ENCODE measurements at regions of chr16 and their contacts with region 1.

Region 1: GRCh38 chr16:84084570-84085270 is 32.0 kb downstream of the MBTPS1 start:
- DNase-seq: peak; percentile 79
- H3K4me3 Mint-ChIP-seq: no peak overlapping the region
- H3K27ac Mint-ChIP-seq: no peak overlapping the region
- H3K4me1 Mint-ChIP-seq: peaks cover 39% of the 10 kb centered on the region
- H3K27me3 Mint-ChIP-seq: no peaks in the 10 kb centered on the region

Region 2: DNA sequence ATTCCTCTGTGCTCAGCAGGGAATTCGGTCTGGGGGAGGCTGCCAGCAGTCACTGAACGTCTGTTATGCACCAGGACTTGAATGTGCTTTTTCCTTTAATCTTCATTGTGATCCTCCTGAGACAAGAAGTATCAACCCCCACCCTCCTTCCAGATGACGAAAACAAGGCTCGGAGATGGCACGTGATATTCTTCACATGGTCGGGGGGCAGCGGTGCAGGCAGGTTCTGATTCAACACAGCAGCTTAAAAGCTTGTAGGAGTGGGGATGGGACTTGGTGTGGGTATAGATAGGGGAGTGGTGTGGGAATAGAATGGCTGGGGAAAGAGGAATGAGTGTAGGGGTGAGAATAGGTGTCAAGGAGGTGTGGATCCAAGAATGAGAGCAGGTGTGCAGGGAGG is 110.2 kb before region 1 on chr16:
- CTCF ChIA-PET with region 1: no interaction called
- POLR2A ChIA-PET with region 1: no interaction called
- intact Hi-C with region 1: no loop called
- DNase-seq: no peak
- H3K4me3 Mint-ChIP-seq: no peak overlapping the region
- H3K27ac Mint-ChIP-seq: no peak overlapping the region
- H3K4me1 Mint-ChIP-seq: no peaks in the 10 kb centered on the region
- H3K27me3 Mint-ChIP-seq: peaks cover 5% of the 10 kb centered on the region

Region 3: GRCh38 chr16:84072014-84072413 is 12.7 kb before region 1 on chr16:
- CTCF ChIA-PET with region 1: interaction called, 22 read pairs
- POLR2A ChIA-PET with region 1: no interaction called
- intact Hi-C with region 1: no loop called
- DNase-seq: no peak
- H3K4me3 Mint-ChIP-seq: no peak overlapping the region
- H3K27ac Mint-ChIP-seq: no peak overlapping the region
- H3K4me1 Mint-ChIP-seq: no peaks in the 10 kb centered on the region
- H3K27me3 Mint-ChIP-seq: no peaks in the 10 kb centered on the region

Region 4: DNA sequence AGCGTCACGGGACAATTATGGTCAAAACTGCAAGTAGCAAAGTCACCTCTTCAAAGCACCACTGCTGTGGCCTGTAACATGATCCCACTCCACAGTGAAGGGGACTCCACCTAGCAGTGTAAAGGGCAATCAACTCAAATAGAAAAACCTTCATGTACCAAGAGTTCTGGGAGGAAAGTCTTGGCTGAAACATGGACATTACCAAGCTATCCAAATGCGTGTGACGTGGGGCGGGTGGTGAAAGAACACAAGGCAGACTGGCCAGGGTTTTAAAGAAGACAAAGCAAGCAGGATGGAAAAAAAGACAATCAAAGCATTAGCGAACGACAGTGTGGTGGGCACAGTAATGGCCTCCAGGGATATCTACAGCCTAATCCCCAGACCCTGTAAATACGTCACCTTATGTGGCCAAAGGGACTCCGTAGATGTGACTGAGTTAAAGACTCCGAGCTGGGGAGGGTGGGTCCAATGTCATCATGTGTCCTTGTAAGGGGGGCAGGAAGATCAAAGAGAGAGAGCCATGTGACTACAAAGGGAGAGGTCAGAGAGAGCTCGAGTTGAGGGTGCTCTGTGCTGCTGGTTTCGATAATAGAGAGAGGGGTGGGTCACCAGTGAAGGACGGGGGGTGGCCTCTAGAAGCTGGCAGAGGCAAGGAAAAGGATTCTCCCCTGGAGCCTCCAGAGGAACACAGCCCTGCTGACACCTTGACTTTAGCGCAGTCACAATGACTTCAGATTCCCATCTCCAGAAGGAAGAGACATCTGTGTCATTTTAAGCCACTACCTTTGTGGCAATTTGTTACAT is 54.3 kb after region 1 on chr16:
- CTCF ChIA-PET with region 1: interaction called, 3 read pairs
- POLR2A ChIA-PET with region 1: no interaction called
- intact Hi-C with region 1: loop called (anchors 2 kb)
- DNase-seq: peak; percentile 63
- H3K4me3 Mint-ChIP-seq: peak overlapping the region; percentile 7
- H3K27ac Mint-ChIP-seq: peak overlapping the region; percentile 3
- H3K4me1 Mint-ChIP-seq: peaks cover 41% of the 10 kb centered on the region
- H3K27me3 Mint-ChIP-seq: no peaks in the 10 kb centered on the region

Region 5: DNA sequence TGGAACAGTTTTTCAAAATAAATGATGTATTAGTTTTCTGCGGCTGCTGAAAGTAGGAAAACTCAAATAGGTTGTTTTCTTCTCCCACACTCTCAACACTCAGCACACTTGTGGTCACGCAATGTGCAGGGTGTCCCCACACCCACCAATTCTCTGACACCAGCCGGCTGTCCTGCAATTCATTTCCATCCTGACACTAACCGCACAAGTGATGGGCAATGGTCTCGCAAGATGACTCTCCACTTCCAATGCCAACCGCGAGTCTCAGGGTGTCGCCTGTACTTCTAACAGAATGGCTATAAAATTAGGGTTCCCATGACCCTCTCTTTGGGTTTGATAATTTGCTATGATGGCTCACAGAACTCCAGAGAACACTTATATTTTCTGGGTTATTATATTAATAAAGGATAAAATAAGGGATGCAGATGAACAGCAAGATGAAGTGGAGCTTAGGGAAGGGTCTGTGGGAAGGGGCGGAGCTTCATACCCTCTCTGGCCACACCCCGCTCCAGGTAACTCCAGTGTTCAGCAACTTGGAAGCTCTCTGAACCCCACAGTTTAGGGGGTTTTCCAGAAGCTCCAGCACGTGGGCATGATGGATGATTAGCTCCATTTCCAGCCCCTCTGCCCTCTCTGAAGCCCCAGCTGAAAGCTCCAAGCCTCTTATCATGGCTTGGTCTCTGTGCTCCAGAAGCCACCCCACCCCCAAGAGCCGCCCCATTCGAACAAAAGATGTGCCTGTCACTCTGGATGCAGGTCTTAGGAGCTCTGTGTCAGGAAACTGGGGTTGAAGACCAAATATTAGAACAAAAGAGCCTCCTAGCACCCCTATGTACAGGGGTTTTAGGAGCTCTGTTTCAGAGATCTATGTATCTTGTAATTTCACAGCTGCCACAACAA is 82.3 kb after region 1 on chr16:
- CTCF ChIA-PET with region 1: interaction called, 12 read pairs
- POLR2A ChIA-PET with region 1: interaction called, 3 read pairs
- intact Hi-C with region 1: no loop called
- DNase-seq: peak; percentile 78
- H3K4me3 Mint-ChIP-seq: no peak overlapping the region
- H3K27ac Mint-ChIP-seq: no peak overlapping the region
- H3K4me1 Mint-ChIP-seq: peaks cover 4% of the 10 kb centered on the region
- H3K27me3 Mint-ChIP-seq: peaks cover 29% of the 10 kb centered on the region

Region 6: DNA sequence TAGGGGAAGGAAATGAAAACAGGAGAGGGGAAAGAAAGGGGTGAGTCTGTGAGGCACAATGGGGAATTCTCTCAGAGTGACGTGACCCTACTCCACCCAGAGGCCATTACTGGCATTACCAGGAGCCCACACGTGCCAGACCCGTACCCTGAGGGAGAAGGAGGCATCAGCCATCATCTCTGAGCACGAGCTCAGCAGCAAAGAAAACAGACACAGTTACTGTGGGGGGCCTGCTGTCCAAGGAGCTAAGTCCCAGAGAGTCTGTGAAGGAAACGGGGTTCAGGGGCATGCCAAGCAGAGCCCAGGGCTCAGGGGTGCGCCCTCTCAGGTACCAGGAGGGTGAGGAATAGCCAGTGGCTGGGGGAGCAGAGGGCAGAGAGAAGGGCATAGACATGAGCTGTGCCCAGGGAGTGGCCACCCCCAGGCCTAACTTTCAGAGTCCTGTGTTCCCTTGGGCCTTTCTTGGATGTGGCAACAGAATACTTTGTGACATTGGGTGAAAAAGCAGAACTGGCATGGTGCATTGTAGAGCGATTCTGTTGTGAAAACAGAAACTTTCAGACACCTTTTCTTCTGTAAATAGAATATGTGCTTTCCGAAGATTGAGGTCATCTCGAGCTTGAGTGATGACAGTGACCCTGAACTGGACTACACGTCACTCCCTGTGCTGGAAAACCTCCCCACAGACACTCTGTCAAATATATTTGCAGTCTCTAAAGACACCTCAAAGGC is 90.8 kb after region 1 on chr16:
- CTCF ChIA-PET with region 1: interaction called, 124 read pairs
- POLR2A ChIA-PET with region 1: interaction called, 4 read pairs
- intact Hi-C with region 1: loop called (anchors 1 kb)
- DNase-seq: peak; percentile 79
- H3K4me3 Mint-ChIP-seq: no peak overlapping the region
- H3K27ac Mint-ChIP-seq: no peak overlapping the region
- H3K4me1 Mint-ChIP-seq: peaks cover 25% of the 10 kb centered on the region
- H3K27me3 Mint-ChIP-seq: peaks cover 6% of the 10 kb centered on the region